Activated CD4-positive, alpha-beta T cell treated with anti-CD3 and anti-CD28 coated beads for 36 hours (primary cell): ENCODE measurements at regions of chr1 and their contacts with region 1.

Region 1: GRCh38 chr1:45303582-45304310 is 22.9 kb upstream of the HPDL start:
- DNase-seq: peak; percentile 100
- ATAC-seq: peak; percentile 83
- H3K4me3 Mint-ChIP-seq: peak overlapping the region; percentile 84
- H3K27ac Mint-ChIP-seq: peak overlapping the region; percentile 95
- H3K4me1 Mint-ChIP-seq: peaks cover 44% of the 10 kb centered on the region
- H3K27me3 Mint-ChIP-seq: no peaks in the 10 kb centered on the region

Region 2: DNA sequence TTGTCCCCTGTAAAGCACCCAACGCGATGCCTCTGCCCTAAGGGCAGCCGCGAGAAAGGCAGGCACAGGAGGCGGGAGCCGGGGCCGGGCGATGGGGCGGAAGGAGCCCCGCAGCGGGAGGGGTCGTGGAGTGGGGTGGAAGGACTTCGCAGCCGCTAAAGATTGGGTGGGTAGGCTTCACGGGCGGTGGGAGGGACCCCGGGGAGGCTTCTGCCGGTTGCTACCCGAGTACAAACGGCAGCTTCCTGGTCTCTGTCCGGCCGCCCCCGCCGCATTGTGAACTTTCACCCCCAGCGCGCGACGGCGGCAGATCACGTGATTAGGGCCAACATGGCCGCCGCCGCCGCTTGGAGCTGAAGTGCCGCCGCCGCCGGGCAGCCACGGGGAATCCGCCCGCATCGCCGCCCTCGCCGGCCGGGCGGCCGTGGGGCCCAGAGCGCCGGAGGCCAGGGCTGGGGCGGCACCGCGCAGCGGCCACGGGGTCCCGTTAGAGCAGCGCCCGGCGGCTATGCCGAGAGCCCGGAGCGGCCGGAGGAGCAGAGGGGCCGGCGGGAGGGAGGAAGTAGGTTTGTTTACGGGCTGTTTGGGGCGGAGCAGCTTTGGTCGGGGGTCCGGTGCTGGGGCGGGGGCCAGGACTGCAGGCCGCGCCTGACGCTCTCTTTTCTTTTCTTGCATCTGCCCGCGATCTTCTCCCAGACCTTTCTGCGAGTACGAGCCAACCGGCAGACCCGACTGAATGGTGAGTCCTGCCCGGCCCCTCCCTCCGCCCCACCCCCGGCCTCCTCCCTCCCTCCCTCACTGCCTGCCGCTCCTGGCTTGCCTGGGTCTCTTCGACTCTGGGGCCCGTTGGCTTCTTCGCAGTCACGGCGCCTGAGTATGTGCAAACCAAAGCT is 671.9 kb before region 1 on chr1:
- CTCF ChIA-PET with region 1: no interaction called
- POLR2A ChIA-PET with region 1: no interaction called
- intact Hi-C with region 1: loop called in 1 of 2 experiments (anchors 2 kb)
- DNase-seq: peak; percentile 95
- ATAC-seq: peak; percentile 81
- H3K4me3 Mint-ChIP-seq: peak overlapping the region; percentile 86
- H3K27ac Mint-ChIP-seq: peak overlapping the region; percentile 97
- H3K4me1 Mint-ChIP-seq: peaks cover 40% of the 10 kb centered on the region
- H3K27me3 Mint-ChIP-seq: no peaks in the 10 kb centered on the region

Region 3: GRCh38 chr1:44739361-44740178 is 564.2 kb before region 1 on chr1 and contains the start of gene KIF2C:
- CTCF ChIA-PET with region 1: no interaction called
- POLR2A ChIA-PET with region 1: no interaction called
- intact Hi-C with region 1: loop called in 1 of 2 experiments (anchors 1 kb)
- DNase-seq: peak; percentile 99
- ATAC-seq: peak; percentile 98
- H3K4me3 Mint-ChIP-seq: peak within 1 kb of the TSS; percentile 98
- H3K27ac Mint-ChIP-seq: peak within 1 kb of the TSS; percentile 94
- H3K4me1 Mint-ChIP-seq: peaks cover 26% of the 10 kb centered on the region
- H3K27me3 Mint-ChIP-seq: no peaks in the 10 kb centered on the region
- total RNA-seq, gene KIF2C: 101 to 119 TPM

Region 4: GRCh38 chr1:44835738-44836675 is 467.7 kb before region 1 on chr1:
- CTCF ChIA-PET with region 1: no interaction called
- POLR2A ChIA-PET with region 1: no interaction called
- intact Hi-C with region 1: loop called (anchors 1 to 2 kb)
- DNase-seq: peak; percentile 96
- ATAC-seq: peak; percentile 99
- H3K4me3 Mint-ChIP-seq: no peak overlapping the region
- H3K27ac Mint-ChIP-seq: no peak overlapping the region
- H3K4me1 Mint-ChIP-seq: peaks cover 3% of the 10 kb centered on the region
- H3K27me3 Mint-ChIP-seq: peaks cover 5% of the 10 kb centered on the region

Region 5: DNA sequence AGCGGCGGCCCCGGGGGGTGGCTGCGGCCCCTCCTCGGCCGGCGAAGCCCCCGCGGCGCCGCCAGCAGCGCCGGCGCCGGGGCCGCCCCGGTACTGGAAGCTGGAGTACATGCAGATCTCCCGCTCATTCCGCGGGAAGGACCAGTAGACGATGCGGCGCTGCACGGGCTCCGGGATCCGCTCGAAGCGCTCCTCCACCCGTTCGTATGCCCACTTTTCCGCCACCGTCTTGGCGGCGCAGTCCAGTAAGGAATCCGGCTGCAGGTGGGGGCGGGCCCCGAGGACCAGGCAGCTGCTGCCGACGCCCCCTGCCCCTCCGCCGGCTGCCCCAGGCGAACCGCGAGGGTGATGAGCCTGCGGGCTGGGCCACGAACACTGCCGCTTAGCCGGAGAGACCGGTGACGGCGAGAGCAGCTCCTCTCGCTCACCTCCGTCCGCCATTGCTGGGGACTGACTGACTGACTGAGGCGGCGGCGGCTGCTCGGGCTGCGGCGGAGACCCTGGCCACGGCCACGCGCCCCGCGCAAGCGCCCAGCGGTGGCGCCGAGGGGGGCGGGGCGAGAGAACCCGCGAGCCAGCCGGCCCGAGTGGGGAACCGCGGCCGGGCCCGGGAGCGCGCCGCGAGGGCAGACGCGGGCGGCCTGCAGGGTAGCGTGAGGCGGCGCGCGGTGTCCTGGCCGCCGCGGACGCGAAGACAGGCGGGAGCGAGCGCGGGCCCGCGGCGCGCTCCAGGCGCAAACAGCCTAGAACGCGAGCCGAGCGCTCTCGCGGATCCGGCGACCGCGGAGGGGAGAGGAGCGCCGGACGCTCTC is 97.6 kb before region 1 on chr1 and contains the start of gene ZSWIM5:
- CTCF ChIA-PET with region 1: no interaction called
- POLR2A ChIA-PET with region 1: interaction called, 3 read pairs
- intact Hi-C with region 1: loop called (anchors 1 to 5 kb)
- DNase-seq: peak; percentile 75
- ATAC-seq: peak; percentile 80
- H3K4me3 Mint-ChIP-seq: peak within 1 kb of the TSS; percentile 82
- H3K27ac Mint-ChIP-seq: peak within 1 kb of the TSS; percentile 87
- H3K4me1 Mint-ChIP-seq: peaks cover 33% of the 10 kb centered on the region
- H3K27me3 Mint-ChIP-seq: peaks cover 18% of the 10 kb centered on the region
- total RNA-seq, gene ZSWIM5: 0.63 to 0.69 TPM

Region 6: GRCh38 chr1:45339789-45340570 is 36.2 kb after region 1 on chr1 and contains the starts of genes MUTYH and TOE1:
- CTCF ChIA-PET with region 1: interaction called, 21 read pairs
- POLR2A ChIA-PET with region 1: interaction called, 44 read pairs
- intact Hi-C with region 1: loop called (anchors 1 kb)
- DNase-seq: peak; percentile 98
- ATAC-seq: peak; percentile 86
- H3K4me3 Mint-ChIP-seq: peak within 1 kb of the TSS; percentile 100
- H3K27ac Mint-ChIP-seq: peak within 1 kb of the TSS; percentile 100
- H3K4me1 Mint-ChIP-seq: peaks cover 27% of the 10 kb centered on the region
- H3K27me3 Mint-ChIP-seq: no peaks in the 10 kb centered on the region
- total RNA-seq, gene MUTYH: 48.6 to 53.7 TPM
- total RNA-seq, gene TOE1: 29.8 to 42.3 TPM

Region 7: DNA sequence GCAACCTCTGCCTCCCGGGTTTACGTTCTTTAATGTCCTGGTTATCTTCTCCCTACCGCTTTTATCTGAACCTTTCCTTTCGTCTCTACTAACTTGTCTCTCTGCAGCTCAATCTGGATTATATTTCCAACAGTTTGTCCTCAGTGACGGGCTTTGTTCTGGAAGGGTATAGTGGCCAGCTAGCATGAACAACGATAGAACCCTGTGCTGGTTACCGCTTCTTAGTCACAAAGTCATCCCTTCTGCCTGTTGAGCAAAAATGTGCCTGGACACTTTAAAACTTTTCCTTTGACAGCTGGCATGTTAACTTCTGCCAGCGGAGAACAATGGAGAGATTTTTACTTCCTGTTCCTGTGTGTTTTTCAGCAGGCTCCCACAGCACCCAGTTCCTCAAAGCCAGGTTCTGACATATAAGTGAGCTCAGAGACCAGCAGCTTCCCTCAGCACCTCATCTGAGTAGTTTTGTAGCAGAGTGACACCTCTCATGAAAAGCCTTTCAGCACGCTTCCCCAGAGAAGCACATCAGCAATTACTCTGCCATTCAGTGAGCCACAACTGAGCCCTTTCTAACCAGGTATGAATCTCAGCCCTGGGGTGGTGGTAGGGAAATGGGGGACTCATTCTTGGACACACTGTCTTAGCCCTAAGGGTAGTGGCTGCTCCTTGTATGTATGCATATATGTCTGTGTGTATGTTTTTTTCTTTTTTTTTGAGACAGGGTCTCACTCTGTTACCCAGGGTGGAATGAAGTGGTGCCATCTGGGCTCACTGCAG is 343.7 kb after region 1 on chr1:
- CTCF ChIA-PET with region 1: no interaction called
- POLR2A ChIA-PET with region 1: no interaction called
- intact Hi-C with region 1: no loop called
- DNase-seq: no peak
- ATAC-seq: no peak
- H3K4me3 Mint-ChIP-seq: no peak overlapping the region
- H3K27ac Mint-ChIP-seq: no peak overlapping the region
- H3K4me1 Mint-ChIP-seq: no peaks in the 10 kb centered on the region
- H3K27me3 Mint-ChIP-seq: no peaks in the 10 kb centered on the region

Region 8: GRCh38 chr1:45775794-45776193 is 472.0 kb after region 1 on chr1:
- CTCF ChIA-PET with region 1: no interaction called
- POLR2A ChIA-PET with region 1: no interaction called
- intact Hi-C with region 1: no loop called
- DNase-seq: no peak
- ATAC-seq: no peak
- H3K4me3 Mint-ChIP-seq: no peak overlapping the region
- H3K27ac Mint-ChIP-seq: no peak overlapping the region
- H3K4me1 Mint-ChIP-seq: no peaks in the 10 kb centered on the region
- H3K27me3 Mint-ChIP-seq: no peaks in the 10 kb centered on the region